Left ventricle myocardium superior (tissue), 1 donor: ENCODE measurements at regions of chr7 and their contacts with region 1.

Region 1: GRCh38 chr7:82044497-82045080 is 274.7 kb upstream of the HGF start:
- DNase-seq: no peak
- ATAC-seq: peak; percentile 55

Region 2: DNA sequence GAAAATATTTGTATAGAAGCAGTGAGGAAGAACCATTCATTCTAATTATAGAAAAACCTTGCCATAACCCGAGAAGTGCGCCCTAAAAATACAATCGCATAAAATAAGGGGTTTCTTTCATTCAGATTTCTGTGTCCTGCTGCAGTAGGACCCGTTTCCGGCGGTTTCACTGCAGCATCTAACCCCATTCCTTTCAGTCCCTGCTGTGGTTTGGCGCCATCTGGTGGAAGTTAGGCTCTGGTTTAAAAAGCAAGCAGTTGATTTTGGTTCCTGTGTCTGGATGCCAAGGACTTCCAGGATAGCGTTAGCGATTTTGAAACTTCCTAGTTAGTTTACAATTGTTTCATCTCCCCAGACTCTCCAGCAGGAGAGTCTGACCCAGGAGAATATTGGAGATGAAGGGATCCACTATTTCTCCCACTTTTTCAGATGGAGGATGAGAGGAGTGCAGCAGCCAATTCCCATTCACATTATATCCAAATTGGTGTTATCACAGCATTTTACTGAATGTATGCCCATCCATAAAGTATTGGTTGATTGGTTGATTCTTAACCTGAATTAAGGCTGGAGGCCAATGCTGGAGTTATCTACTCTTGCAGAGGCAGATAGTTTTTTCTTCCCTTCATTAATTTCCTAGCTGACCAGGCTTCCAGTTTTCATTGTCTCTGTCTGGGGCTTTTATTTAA is 527.7 kb after region 1 on chr7:
- intact Hi-C with region 1: loop called (anchors 5 kb)
- DNase-seq: peak; percentile 82
- ATAC-seq: peak; percentile 89

Region 3: DNA sequence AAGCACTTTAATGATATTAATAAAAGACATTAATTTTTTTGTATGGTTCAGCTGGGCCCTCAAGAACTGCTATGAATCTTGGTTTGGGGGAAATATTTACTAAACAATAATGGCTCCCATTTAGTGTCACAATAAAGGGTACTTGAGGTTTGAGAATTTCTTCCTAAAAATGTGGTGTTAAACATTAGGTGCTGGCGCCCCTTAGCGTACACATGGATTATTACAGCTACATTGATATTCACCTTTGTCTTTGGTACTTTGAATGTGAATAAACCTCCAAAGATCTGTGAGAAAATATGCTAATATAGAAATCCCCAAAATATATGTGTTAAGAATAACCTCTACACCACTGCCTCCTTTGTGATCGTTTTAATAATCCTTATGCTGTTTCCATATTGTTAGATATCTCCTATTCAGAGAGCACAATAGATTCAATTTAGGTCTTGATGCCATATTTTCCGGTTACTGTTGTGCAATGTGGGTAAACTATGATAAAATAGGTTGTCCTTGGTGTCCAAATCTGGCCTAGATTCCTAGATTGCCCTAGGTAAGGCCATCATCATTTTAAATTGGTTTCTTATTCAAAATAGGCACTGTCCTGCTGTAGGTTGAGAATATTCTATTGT is 560.8 kb after region 1 on chr7:
- intact Hi-C with region 1: loop called (anchors 10 kb)
- DNase-seq: no peak
- ATAC-seq: no peak